BJ (cell line): ENCODE measurements at regions of chr4 and their contacts with region 1.

Region 1: DNA sequence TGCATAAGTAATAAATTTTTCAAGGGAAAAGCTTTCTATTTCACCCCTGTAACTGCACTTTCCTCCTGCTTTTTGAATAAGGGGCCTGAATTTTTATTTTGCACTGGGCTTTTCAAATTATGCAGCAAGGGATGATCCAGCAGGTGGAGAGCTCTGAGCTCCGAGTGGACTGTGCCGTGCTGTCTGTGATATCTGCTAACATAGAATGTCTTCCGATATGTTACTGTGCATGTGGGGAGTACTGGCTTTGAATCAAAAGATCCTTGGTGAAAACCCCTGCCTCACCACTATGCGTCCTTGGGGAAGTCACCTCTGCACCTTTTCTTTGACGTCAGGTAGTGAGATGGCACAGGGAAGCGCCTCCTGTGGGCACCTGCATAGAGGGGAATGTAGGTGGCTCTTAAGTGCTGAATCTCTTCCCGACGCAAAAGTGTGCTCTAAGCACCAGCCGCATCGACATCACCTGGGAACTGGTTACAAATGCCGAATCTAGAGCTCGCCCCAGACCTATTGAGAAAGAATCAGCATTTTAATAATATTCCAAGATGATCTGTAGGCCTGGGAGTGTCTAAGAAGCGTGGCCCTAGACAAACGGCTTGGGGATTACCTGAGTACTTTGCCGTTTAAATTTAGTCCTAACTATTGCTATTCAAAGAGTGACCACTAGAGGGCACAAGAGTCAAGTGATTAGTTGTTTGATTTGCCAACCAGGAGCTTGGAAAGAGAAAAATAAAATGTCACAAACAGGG is 19.2 kb upstream of the WFS1 start:
- DNase-seq: peak; percentile 7
- H3K4me3 ChIP-seq: no peak overlapping the region
- H3K27me3 ChIP-seq: peaks cover 10% of the 10 kb centered on the region
- CTCF ChIP-seq: peak; percentile 77

Region 2: GRCh38 chr4:6225469-6225868 is 24.9 kb before region 1 on chr4:
- CTCF ChIA-PET with region 1: interaction called, 12 read pairs
- POLR2A ChIA-PET with region 1: no interaction called
- DNase-seq: no peak
- H3K4me3 ChIP-seq: no peak overlapping the region
- H3K27me3 ChIP-seq: peaks cover 3% of the 10 kb centered on the region; the same call in 1 of the 2 replicates
- CTCF ChIP-seq: no peak

Region 3: DNA sequence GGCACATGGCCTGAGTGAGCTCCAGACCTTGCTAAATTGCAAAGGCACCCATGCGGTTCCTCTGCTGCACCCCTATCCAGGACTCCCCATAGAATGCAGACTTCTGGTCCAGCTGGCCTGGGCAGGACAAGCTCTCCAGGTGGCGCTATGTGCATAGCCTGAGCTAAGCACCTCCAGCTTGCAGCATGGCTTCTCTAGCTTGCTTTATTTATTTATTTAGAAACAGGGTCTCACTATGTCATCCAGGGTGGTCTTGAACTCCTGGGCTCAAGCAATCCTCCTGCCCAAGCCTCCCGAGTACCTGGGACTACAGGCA is 13.8 kb after region 1 on chr4:
- CTCF ChIA-PET with region 1: interaction called, 107 read pairs
- POLR2A ChIA-PET with region 1: no interaction called
- DNase-seq: no peak
- H3K4me3 ChIP-seq: no peak overlapping the region
- H3K27me3 ChIP-seq: peaks cover 1% of the 10 kb centered on the region; the same call in 1 of the 2 replicates
- CTCF ChIP-seq: peak; percentile 81

Region 4: DNA sequence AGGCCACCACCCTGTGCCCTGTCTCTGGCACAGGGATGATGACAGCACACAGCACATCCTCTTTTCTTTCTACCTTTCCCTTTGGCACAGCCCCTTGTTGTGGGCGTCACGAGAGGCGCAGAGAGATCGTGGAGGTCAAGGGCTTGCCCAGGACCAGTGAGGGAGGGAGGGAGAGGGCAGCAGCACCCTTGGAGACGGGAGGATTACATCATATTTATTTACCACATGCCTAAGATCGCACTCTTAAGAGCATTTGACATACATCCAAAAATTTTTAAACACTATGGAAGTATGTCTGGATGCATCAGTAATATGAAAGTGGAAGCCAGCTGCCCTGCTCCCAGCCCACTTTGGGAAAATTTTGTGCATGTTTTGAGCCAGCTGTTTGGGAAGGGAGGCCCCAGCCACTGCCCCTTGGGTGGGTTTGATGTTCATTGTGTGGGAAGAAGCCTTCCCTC is 31.9 kb after region 1 on chr4:
- CTCF ChIA-PET with region 1: interaction called, 10 read pairs
- POLR2A ChIA-PET with region 1: no interaction called
- DNase-seq: no peak
- H3K4me3 ChIP-seq: no peak overlapping the region
- H3K27me3 ChIP-seq: no peaks in the 10 kb centered on the region
- CTCF ChIP-seq: no peak

Region 5: GRCh38 chr4:6319530-6320150 is 69.2 kb after region 1 on chr4:
- CTCF ChIA-PET with region 1: interaction called, 496 read pairs
- POLR2A ChIA-PET with region 1: no interaction called
- DNase-seq: no peak
- H3K4me3 ChIP-seq: no peak overlapping the region
- H3K27me3 ChIP-seq: peaks cover 4% of the 10 kb centered on the region
- CTCF ChIP-seq: no peak

Region 6: DNA sequence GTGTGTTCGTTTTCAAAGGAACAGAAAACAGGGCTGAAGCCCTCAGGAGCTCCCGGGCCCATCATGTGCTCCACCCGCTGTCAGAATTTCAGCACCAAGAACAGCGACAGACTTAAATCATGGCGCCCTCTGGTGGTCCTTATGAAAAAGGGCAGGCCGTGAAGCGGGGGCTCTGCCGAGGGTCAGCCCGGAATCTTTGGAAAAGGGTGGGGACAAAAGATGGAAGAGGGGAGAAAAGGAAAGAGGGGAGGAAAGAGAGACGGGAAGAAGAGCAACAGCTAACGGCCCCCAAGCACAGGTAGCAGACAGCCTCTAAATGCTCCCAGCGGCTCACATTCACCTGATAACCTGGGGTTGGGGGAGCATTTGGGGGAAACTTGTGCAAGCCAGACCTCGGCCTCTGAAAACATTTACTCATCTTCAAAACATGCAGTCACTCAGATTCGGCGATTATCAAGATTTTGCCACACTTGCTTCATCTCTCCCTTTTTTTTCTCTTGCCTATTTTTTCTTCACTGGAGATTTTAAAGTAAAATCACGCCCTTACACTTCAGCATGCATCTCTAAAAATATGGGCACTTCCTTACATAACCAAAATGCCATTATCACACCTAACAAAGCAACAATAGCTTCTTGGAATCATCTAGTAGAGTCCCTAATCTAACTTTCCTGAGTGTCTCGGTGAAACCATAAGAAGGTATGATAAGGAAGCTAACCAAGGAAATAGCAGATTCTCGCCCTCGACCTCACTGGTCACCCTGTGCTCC is 296.5 kb after region 1 on chr4:
- CTCF ChIA-PET with region 1: interaction called, 28 read pairs
- POLR2A ChIA-PET with region 1: no interaction called
- DNase-seq: no peak
- H3K4me3 ChIP-seq: no peak overlapping the region
- H3K27me3 ChIP-seq: peaks cover 3% of the 10 kb centered on the region; the same call in 1 of the 2 replicates
- CTCF ChIP-seq: peak; percentile 90

Region 7: DNA sequence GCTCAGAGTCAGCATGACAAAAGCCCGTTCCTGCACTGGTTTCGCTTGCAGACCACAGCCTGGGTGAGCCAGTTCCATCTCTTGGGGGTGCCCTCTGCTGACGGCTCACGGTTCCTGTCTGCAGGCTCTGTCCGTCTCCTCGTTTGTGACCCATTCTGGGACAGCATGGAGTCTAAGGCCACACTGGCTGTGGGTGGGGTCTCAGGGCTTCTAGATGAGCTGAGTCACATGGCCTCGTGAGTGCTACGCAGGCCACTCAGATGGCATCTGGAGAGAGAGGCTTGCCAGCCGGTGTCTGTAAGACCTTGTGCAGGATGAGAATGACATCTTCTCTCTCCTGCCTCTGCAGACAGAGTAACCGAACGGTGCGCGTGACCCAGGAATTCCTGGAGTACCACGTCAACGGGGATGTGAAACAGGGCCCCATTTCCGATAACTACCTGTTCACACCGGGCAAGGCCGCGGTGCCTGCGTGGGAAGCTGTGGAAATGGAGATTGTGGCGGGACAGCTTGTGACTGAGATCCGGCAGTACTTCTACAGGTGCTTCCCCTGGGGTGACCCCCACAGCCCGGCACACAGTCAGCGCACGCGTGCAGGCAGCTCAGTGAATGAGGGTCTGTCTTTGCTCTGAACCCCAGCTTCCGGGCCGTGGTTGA is 358.5 kb after region 1 on chr4:
- CTCF ChIA-PET with region 1: no interaction called
- POLR2A ChIA-PET with region 1: no interaction called
- DNase-seq: no peak
- H3K4me3 ChIP-seq: no peak overlapping the region
- H3K27me3 ChIP-seq: no peaks in the 10 kb centered on the region
- CTCF ChIP-seq: no peak